A673 (cell line): ENCODE measurements at regions of chr6 and their contacts with region 1.

Region 1: GRCh38 chr6:99458319-99458718 is 33.2 kb upstream of the PNISR start:
- DNase-seq: peak; percentile 54
- H3K4me3 ChIP-seq: no peak overlapping the region
- H3K27ac ChIP-seq: no peak overlapping the region
- H3K4me1 ChIP-seq: no peaks in the 10 kb centered on the region
- H3K27me3 ChIP-seq: no peaks in the 10 kb centered on the region
- CTCF ChIP-seq: peak; percentile 57

Region 2: GRCh38 chr6:99613409-99613704 is 155.0 kb after region 1 on chr6:
- CTCF ChIA-PET with region 1: interaction called, 10 read pairs
- POLR2A ChIA-PET with region 1: no interaction called
- intact Hi-C with region 1: no loop called
- DNase-seq: peak; percentile 75
- H3K4me3 ChIP-seq: peak overlapping the region; percentile 50
- H3K27ac ChIP-seq: no peak overlapping the region
- H3K4me1 ChIP-seq: peaks cover 10% of the 10 kb centered on the region
- H3K27me3 ChIP-seq: peaks cover 63% of the 10 kb centered on the region
- CTCF ChIP-seq: peak; percentile 59